Endothelial cell of umbilical vein (primary cell): ENCODE measurements at regions of chr1 and their contacts with region 1.

Region 1: GRCh38 chr1:39609618-39610331 is 29.7 kb downstream of the HEYL start:
- DNase-seq: peak; percentile 30
- H3K4me3 ChIP-seq: no peak overlapping the region
- H3K27ac ChIP-seq: no peak overlapping the region
- H3K4me1 ChIP-seq: no peaks in the 10 kb centered on the region
- H3K27me3 ChIP-seq: peaks cover 0 to 5% of the 10 kb centered on the region in 2 experiments
- CTCF ChIP-seq: peak; percentile 88 to 93
- POLR2A ChIP-seq: no peak

Region 2: DNA sequence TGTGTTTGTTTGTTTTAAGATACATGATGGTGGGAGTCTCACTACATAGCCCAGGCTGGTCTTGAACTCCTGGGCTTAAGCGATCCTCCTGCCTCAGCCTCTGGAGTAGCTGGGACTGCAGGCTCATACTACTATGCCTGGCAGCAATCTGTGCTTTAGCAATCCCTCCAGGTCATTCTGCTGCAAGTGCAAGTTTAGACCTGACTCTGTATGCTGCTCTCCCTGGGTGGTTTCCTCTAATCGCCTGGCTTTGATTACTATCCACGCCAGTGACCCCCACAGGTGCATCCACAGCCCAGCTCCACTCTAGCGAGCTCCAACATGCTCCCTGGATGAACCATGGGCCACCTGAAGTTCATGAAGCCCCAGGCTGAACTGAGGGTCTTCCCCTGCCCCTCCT is 17.7 kb before region 1 on chr1:
- CTCF ChIA-PET with region 1: interaction called, 19 read pairs
- POLR2A ChIA-PET with region 1: no interaction called
- dilution Hi-C with region 1: no loop called
- intact Hi-C with region 1: no loop called
- DNase-seq: no peak
- H3K4me3 ChIP-seq: no peak overlapping the region
- H3K27ac ChIP-seq: no peak overlapping the region
- H3K4me1 ChIP-seq: no peaks in the 10 kb centered on the region
- H3K27me3 ChIP-seq: peaks cover 5 to 11% of the 10 kb centered on the region in 2 experiments
- CTCF ChIP-seq: no peak
- POLR2A ChIP-seq: no peak

Region 3: DNA sequence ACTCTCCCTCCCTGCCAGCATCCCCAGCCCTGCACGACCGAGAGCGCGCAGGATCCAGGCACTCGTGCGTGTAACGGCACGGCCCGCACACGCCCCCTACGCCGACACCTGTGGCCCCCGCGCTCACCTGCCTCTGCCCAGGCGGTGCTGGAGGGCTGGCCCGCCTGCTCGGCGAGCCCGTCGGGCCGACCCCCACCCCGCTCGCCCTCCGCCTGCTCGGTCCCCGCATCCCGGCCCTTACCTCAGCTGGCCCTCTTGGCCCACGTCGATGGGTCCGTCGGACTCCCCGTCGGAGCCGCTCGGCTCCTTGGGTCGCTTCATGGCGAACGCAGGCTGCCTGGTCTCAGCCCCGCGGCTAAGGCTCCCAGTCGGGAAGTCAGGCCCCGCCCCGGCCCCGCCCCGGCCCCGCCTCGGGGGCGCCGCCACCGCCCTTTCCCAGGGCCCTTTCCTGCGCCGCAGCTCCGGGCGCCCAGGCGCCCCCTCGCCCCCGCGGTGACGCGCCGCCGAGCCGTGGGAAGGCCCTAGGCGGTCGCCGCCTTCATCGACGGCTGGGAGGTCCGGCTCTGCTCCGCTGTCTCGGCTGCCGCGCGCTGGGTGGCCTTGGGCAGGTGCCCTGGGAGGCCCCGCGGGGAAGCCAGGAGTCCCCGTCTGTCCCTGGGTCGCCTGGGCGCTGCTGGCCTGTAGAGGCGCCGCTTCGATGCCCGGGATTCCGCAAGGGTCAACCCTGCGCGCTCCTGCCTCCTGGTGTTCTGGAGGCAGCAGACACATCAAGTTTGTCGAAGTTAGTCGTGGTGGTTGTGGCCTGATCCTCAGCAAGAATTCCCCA is 29.7 kb after region 1 on chr1 and contains the start of gene HEYL:
- CTCF ChIA-PET with region 1: interaction called, 29 read pairs
- POLR2A ChIA-PET with region 1: no interaction called
- dilution Hi-C with region 1: no loop called
- intact Hi-C with region 1: no loop called
- DNase-seq: no peak
- H3K4me3 ChIP-seq: no peak within 1 kb of the TSS
- H3K27ac ChIP-seq: no peak within 1 kb of the TSS
- H3K4me1 ChIP-seq: no peaks in the 10 kb centered on the region
- H3K27me3 ChIP-seq: peaks cover 44 to 59% of the 10 kb centered on the region in 2 experiments
- CTCF ChIP-seq: peak; percentile 14 to 32
- POLR2A ChIP-seq: no peak
- total RNA-seq, gene HEYL: not detected in 2 replicates

Region 4: GRCh38 chr1:39663559-39663958 is 53.8 kb after region 1 on chr1:
- CTCF ChIA-PET with region 1: interaction called, 440 read pairs
- POLR2A ChIA-PET with region 1: no interaction called
- dilution Hi-C with region 1: no loop called
- intact Hi-C with region 1: loop called (anchors 1 kb)
- DNase-seq: no peak
- H3K4me3 ChIP-seq: no peak overlapping the region
- H3K27ac ChIP-seq: no peak overlapping the region
- H3K4me1 ChIP-seq: no peaks in the 10 kb centered on the region
- H3K27me3 ChIP-seq: peaks cover 7 to 21% of the 10 kb centered on the region in 2 experiments
- CTCF ChIP-seq: no peak
- POLR2A ChIP-seq: no peak

Region 5: DNA sequence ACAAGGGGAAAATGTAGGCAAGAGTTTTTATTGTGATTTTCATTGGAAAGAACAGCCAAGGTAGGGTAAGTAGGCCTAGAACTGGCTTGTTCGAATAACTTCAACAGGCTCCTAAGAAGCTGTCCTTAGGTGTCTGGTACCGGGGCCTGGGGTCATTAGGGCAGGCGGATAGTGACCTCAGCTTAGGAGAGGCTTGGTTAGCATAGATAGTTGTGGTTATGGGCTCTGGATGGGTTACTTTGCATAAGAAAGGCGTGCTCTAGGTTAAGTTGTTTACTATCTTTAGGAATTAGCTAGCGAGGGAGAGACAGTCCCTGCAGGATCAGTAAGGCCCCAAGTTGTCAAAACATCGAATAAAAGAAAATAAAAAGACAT is 102.2 kb after region 1 on chr1:
- CTCF ChIA-PET with region 1: interaction called, 64 read pairs
- POLR2A ChIA-PET with region 1: no interaction called
- dilution Hi-C with region 1: no loop called
- intact Hi-C with region 1: no loop called
- DNase-seq: no peak
- H3K4me3 ChIP-seq: no peak overlapping the region
- H3K27ac ChIP-seq: no peak overlapping the region
- H3K4me1 ChIP-seq: no peaks in the 10 kb centered on the region
- H3K27me3 ChIP-seq: peaks cover 28 to 29% of the 10 kb centered on the region in 2 experiments
- CTCF ChIP-seq: no peak
- POLR2A ChIP-seq: no peak

Region 6: GRCh38 chr1:39738622-39739366 is 129.0 kb after region 1 on chr1 and contains the start of gene PPIE:
- CTCF ChIA-PET with region 1: interaction called, 12 read pairs
- POLR2A ChIA-PET with region 1: no interaction called
- dilution Hi-C with region 1: no loop called
- intact Hi-C with region 1: no loop called
- DNase-seq: peak; percentile 88
- H3K4me3 ChIP-seq: peak within 1 kb of the TSS; percentile 60 to 88 (median 81)
- H3K27ac ChIP-seq: peak within 1 kb of the TSS; percentile 43
- H3K4me1 ChIP-seq: peaks cover 8% of the 10 kb centered on the region
- H3K27me3 ChIP-seq: peaks cover 3 to 9% of the 10 kb centered on the region in 2 experiments
- CTCF ChIP-seq: no peak
- POLR2A ChIP-seq: peak; percentile 85
- total RNA-seq, gene PPIE: 42.6 and 44.4 TPM in 2 replicates